A673 (cell line): ENCODE measurements at regions of chr20 and their contacts with region 1.

Region 1: DNA sequence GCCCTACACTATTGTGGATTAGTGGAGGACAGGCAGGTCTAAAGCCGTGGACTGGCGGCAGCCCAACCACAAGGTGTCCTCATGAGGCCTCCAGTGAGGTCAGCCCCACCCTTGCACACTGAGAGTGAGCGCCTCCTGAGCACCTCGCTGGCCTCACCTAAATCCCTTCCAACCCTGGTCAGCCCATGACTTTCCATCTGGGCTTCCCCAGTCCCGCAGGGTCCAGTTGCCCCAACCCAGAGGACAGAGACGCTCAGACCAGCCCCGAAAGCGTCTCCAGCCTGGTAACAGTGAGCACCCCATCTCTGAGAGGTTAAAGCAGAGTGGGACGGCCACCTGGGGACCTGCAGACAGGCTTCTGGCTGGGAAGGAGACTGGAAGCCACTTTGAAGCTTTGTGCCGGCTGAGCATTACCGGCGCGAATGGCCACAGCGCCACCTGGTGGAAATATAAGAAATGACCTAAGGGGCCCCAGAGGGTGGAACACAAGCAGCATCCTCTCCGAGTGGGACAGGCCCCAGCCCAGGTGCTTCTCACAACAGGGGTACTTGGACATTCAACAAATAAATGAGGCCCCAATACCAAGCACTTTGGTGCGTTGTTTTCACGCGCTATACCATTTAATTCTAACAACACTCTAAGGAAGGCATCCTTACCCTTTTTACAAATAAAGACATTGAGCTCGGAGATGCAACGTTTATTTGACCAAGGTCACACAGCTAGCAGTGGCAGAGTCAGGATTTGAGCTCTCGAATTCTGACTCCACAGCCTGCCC is 65.7 kb upstream of the TOP1 start:
- DNase-seq: peak; percentile 79
- H3K4me3 ChIP-seq: no peak overlapping the region
- H3K27ac ChIP-seq: no peak overlapping the region
- H3K4me1 ChIP-seq: no peaks in the 10 kb centered on the region
- H3K27me3 ChIP-seq: no peaks in the 10 kb centered on the region
- CTCF ChIP-seq: peak; percentile 81

Region 2: DNA sequence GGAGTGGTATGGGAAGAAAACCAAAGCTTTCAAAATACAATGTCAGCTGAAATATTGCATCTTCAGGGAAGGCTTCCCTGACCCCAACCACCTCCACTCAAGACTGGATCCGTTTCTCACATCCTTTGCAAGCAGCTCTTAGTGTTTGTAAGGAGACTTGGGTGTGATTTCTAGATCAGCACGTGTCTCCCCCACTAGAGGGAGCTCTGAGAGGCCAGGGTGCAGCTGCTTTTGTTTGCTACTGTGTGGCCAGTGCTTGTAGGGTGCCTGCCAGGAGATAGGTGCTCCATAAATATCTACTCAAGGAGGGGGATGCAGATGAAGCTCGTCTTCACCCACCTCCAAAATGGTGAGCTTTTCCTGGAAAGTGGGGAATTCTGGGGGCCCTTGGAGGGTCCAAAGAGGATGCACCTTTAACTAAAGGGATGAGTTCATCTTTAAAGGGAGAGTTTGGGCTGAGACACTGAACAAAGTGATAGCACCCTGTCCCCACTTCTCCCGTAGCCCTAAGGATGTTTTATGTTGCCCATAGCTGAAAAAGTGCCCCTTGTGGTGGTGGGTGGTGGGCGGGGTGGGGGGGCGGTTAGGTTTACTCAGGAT is 221.3 kb before region 1 on chr20:
- CTCF ChIA-PET with region 1: interaction called, 6 read pairs
- POLR2A ChIA-PET with region 1: no interaction called
- intact Hi-C with region 1: loop called (anchors 5 kb)
- DNase-seq: peak; percentile 62
- H3K4me3 ChIP-seq: no peak overlapping the region
- H3K27ac ChIP-seq: no peak overlapping the region
- H3K4me1 ChIP-seq: no peaks in the 10 kb centered on the region
- H3K27me3 ChIP-seq: peaks cover 33% of the 10 kb centered on the region
- CTCF ChIP-seq: peak; percentile 82

Region 3: GRCh38 chr20:41078329-41078728 is 115.4 kb after region 1 on chr20:
- CTCF ChIA-PET with region 1: no interaction called
- POLR2A ChIA-PET with region 1: no interaction called
- intact Hi-C with region 1: loop called (anchors 5 kb)
- DNase-seq: peak; percentile 83
- H3K4me3 ChIP-seq: no peak overlapping the region
- H3K27ac ChIP-seq: peak overlapping the region; percentile 57
- H3K4me1 ChIP-seq: peaks cover 26% of the 10 kb centered on the region
- H3K27me3 ChIP-seq: no peaks in the 10 kb centered on the region
- CTCF ChIP-seq: peak; percentile 70

Region 4: DNA sequence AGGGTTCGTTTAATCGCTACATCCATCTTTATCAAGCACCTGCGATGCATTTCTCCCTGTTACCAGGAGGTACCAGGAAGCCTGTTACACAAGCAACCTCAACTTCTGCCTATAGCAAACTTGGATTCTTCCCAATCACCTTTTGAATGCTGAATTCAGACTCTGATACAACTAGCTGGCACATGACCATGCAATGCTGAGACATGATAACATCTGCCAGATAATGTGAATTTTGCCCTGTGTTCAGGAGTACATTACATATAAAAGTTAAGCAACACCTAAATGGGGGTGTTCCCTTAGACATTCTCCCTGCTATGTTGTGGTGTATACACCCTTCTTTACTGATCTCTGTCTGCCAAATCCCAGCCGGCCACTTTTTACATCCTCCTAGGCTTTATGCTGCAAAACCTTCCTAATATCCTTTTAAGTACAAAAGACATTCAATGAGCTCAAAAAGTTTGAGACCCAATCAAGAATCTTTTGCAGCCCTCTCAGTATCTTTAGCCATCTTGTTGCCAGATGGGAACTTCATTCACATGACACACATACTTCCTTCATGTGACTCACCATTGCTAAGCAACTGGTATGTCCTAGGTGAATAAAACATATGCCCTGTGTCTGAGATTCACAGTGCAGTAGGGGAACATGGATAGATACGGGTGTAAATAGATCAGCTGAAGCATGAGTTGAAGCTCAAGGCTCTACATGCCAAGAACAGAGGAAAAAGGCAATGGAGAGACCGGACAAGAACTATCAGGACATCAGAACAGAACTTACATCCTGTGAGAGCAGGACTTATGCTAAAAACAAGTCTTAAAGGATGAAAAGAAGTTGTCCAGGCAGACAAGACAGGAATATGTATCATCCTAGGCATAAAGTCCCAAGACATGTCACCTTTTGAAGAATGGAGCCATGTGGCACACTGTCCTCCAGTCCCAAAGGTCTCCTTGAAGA is 270.3 kb after region 1 on chr20:
- CTCF ChIA-PET with region 1: interaction called, 5 read pairs
- POLR2A ChIA-PET with region 1: no interaction called
- intact Hi-C with region 1: loop called (anchors 1 kb)
- DNase-seq: no peak
- H3K4me3 ChIP-seq: peak overlapping the region; percentile 31
- H3K27ac ChIP-seq: no peak overlapping the region
- H3K4me1 ChIP-seq: peaks cover 24% of the 10 kb centered on the region
- H3K27me3 ChIP-seq: no peaks in the 10 kb centered on the region
- CTCF ChIP-seq: no peak